Endothelial cell of umbilical vein (primary cell): ENCODE measurements at regions of chr4 and their contacts with region 1.

Region 1: DNA sequence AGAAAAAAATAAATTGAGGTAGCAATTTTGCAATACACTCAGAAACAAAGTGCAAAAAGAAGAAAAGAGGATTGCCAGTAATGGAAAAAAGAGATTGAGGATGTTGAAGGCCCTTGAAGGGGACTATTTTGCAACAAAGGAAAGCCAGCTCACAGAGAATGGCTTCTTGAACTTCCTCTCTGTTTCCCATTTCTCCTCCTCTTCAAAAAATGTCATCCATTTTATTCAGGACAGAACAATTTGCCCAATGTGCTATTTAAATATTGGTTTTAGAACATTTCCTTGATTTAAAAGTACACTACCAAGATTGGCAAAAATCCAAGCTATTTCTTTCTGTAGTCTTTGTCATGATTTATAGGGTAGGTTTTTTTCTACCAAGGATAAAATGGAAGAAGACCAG is 60.2 kb downstream of the GASK1B start:
- DNase-seq: peak; percentile 71
- H3K4me3 ChIP-seq: no peak overlapping the region
- H3K27ac ChIP-seq: no peak overlapping the region
- H3K4me1 ChIP-seq: peaks cover 4% of the 10 kb centered on the region
- H3K27me3 ChIP-seq: no peaks in the 10 kb centered on the region
- CTCF ChIP-seq: no peak
- POLR2A ChIP-seq: no peak

Region 2: GRCh38 chr4:158099686-158100085 is 12.9 kb before region 1 on chr4:
- CTCF ChIA-PET with region 1: interaction called, 5 read pairs
- POLR2A ChIA-PET with region 1: no interaction called
- dilution Hi-C with region 1: no loop called
- intact Hi-C with region 1: loop called (anchors 1 kb)
- DNase-seq: peak; percentile 48
- H3K4me3 ChIP-seq: no peak overlapping the region
- H3K27ac ChIP-seq: no peak overlapping the region
- H3K4me1 ChIP-seq: peaks cover 6% of the 10 kb centered on the region
- H3K27me3 ChIP-seq: no peaks in the 10 kb centered on the region
- CTCF ChIP-seq: no peak
- POLR2A ChIP-seq: no peak

Region 3: GRCh38 chr4:158161551-158162354 is 49.1 kb after region 1 on chr4:
- CTCF ChIA-PET with region 1: no interaction called
- POLR2A ChIA-PET with region 1: no interaction called
- dilution Hi-C with region 1: no loop called
- intact Hi-C with region 1: no loop called
- DNase-seq: peak; percentile 99
- H3K4me3 ChIP-seq: peak overlapping the region in 1 of 3 experiments; percentile 16
- H3K27ac ChIP-seq: peak overlapping the region; percentile 77
- H3K4me1 ChIP-seq: peaks cover 94% of the 10 kb centered on the region
- H3K27me3 ChIP-seq: no peaks in the 10 kb centered on the region
- CTCF ChIP-seq: no peak
- POLR2A ChIP-seq: peak; percentile 49